PC-3 (cell line): ENCODE measurements at regions of chrX and their contacts with region 1.

Region 1: GRCh38 chrX:71652405-71652804 is 14.9 kb upstream of the LOC101059915 start:
- DNase-seq: peak; percentile 72
- ATAC-seq: peak; percentile 55
- H3K4me3 ChIP-seq: no peak overlapping the region
- H3K27ac ChIP-seq: no peak overlapping the region
- H3K4me1 ChIP-seq: no peaks in the 10 kb centered on the region
- H3K27me3 ChIP-seq: no peaks in the 10 kb centered on the region
- CTCF ChIP-seq: peak; percentile 69

Region 2: GRCh38 chrX:71439420-71439819 is 213.0 kb before region 1 on chrX:
- CTCF ChIA-PET with region 1: no interaction called
- POLR2A ChIA-PET with region 1: no interaction called
- intact Hi-C with region 1: loop called (anchors 10 kb)
- DNase-seq: no peak
- ATAC-seq: no peak
- H3K4me3 ChIP-seq: no peak overlapping the region
- H3K27ac ChIP-seq: no peak overlapping the region
- H3K4me1 ChIP-seq: no peaks in the 10 kb centered on the region
- H3K27me3 ChIP-seq: no peaks in the 10 kb centered on the region
- CTCF ChIP-seq: no peak

Region 3: DNA sequence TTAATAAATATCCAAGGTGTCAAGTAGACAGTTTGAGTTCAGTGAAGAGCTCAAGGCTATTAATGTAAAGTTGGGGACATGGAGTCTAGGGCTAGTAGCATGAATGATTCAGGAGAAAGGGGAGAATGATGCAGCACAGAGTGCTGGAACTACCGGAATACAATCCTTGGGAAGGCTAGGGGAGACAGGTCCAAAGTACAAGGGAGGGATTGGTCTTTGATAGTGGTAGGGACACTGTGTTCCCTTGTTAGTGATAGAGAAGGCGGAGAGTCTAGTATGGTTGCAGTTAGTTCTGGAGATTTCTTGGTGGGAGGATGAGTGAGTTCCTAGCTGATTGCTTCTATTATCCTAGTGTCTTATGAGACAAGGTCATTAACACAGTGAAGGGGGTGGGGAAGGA is 65.5 kb before region 1 on chrX:
- CTCF ChIA-PET with region 1: no interaction called
- POLR2A ChIA-PET with region 1: no interaction called
- intact Hi-C with region 1: loop called (anchors 10 kb)
- DNase-seq: no peak
- ATAC-seq: no peak
- H3K4me3 ChIP-seq: no peak overlapping the region
- H3K27ac ChIP-seq: no peak overlapping the region
- H3K4me1 ChIP-seq: no peaks in the 10 kb centered on the region
- H3K27me3 ChIP-seq: no peaks in the 10 kb centered on the region
- CTCF ChIP-seq: no peak